ENCODE measurements at regions of chr9 and their contacts with region 1.

Region 1: GRCh38 chr9:71249729-71250317 is 128.4 kb upstream of the TRPM3 start:
- DNase-seq: no peak
- ATAC-seq: peak; percentile 86

Region 2: DNA sequence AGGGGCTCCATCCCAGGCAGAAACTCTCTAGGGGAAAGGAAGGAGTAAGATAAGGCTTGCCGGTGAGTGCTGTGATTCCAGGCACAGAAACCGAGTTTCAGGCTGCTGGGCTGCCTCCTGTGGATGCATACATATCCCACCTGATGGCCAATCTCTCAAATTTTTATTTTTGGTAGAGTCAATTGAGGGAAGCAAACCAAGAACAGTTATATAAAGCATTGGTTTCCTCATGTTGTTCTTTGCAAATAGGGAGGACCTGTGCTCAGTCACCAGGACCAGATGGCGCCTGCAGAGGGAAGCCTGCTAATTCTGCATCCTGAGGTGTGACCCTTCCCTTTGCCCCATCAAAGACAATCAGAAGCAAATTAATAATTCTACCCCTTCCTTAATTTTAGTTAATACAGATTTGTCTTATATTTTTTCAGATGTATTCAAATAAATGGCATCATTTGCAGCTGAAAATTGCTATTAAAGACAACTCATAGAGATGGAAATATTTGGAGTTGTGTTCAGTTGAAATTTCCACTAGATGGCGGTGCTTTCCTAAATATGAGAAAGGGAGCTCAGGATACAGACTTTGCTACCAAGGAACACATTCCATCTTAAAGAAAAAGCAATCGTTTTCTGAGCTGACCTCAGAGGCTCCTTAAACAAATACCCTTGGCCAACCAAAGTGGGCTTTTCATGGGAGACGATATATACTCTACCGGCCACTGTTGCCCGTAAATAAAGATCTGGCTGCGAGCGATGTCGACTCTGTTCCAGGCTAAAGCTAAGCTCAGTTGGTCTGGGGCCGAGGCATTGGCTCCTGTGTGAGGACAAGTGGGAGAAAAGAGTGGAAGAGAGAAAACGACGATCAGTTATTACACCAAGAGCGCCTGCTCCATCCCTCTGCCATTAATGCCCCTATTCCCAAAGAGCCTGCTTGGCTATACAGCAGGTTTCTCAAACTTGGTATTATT is 609.7 kb before region 1 on chr9:
- intact Hi-C with region 1: loop called (anchors 10 kb)
- DNase-seq: no peak
- ATAC-seq: peak; percentile 83

Region 3: DNA sequence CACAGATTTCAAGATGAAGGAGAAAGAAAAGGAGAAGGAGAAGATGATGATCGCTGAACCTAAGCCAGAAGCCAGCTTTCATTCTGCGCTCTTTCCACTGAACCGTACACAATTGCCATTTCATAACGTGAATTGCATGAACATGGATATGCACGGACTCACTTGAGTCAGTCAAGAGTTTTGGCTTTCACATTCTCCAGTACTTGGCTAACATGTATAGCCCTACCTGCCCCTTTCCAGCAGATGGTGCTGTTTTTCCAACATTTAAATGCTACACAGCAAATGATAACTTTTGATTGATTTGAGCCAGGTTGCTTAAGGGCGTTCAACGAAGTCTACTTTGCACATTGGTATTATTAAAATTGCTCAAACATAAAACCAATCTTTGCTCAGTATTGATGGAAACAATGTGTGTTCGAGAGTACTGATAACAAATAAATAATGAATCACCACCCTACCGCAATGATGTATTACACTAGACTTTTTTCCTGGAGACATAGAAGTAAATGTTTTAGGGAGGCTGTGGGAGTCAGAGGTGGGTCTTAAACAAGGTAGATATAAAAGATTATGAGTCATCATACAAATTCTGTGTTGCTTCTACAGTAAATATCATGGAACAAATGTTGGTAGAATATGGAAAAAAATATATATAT is 324.8 kb before region 1 on chr9:
- intact Hi-C with region 1: loop called (anchors 5 kb)
- DNase-seq: no peak
- ATAC-seq: peak; percentile 96

Region 4: DNA sequence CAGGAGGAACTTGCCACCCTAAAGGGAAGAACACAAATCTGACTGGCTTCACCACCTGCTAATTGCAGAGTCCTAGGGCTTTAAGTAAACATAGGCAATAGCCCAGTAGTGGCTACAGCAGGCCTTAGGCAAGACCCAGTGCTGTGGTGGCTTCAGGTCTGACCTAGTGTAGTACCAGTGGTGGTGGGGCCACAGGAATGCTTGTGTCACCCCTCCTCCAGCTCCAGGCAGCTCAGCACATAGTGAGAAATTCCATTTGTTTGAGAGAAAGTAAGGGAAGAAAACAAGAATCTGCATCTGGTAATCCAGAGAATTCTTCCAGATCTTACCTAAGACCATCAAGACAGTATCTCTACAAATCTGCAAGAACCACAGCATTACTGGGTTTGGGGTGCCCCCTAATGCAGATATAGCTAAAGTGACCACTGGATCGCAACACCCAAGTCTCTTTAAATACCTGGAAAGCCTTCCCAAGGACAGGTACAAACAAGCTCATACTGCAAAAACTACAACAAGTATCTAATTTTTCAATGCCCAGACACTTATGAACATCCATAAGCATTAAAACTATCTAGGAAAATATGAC is 25.8 kb before region 1 on chr9:
- intact Hi-C with region 1: no loop called
- DNase-seq: no peak
- ATAC-seq: no peak